Prostate gland (tissue), 2 donors: ENCODE measurements at regions of chr1 and their contacts with region 1.

Region 1: GRCh38 chr1:201511941-201512539 is 5.1 kb upstream of the CSRP1 start:
- DNase-seq: peak; percentile 79
- H3K4me3 ChIP-seq: no peak overlapping the region
- H3K27ac ChIP-seq: peak overlapping the region; percentile 79 to 83
- H3K4me1 ChIP-seq: peaks cover 25% of the 10 kb centered on the region
- H3K27me3 ChIP-seq: no peaks in the 10 kb centered on the region
- CTCF ChIP-seq: peak in 1 of 4 experiments; percentile 8
- POLR2A ChIP-seq: peak; percentile 17

Region 2: GRCh38 chr1:201481761-201482493 is 30.1 kb before region 1 on chr1:
- intact Hi-C with region 1: loop called (anchors 1 kb)
- DNase-seq: peak; percentile 84
- H3K4me3 ChIP-seq: peak overlapping the region in 1 of 2 donors; percentile 4
- H3K27ac ChIP-seq: peak overlapping the region; percentile 70 to 75
- H3K4me1 ChIP-seq: no peaks in the 10 kb centered on the region
- H3K27me3 ChIP-seq: no peaks in the 10 kb centered on the region
- CTCF ChIP-seq: peak; percentile 90 to 99 (median 98)
- POLR2A ChIP-seq: no peak